PC-9 (cell line): ENCODE measurements at regions of chr7 and their contacts with region 1.

Region 1: DNA sequence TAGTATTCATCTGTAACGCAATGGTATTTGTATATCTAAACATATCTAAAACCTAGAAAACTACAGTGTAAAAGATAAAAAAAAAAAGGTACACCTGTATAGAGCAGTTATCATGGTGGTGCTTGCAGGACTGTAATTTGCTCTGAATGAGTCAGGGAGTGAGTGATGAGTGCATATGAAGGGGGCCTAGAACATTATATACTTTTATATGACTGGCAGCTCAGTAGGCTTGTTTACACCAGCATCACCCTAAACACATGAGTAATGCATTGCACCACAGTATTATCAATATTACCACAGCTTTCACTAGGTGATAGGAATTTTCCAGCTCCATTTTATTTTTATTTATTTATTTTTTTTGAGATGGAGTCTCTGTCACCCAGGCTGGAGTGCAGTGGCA is 40.8 kb downstream of the TRIM24 start:
- DNase-seq: no peak
- H3K4me3 ChIP-seq: no peak overlapping the region
- H3K27ac ChIP-seq: no peak overlapping the region
- H3K4me1 ChIP-seq: no peaks in the 10 kb centered on the region; the same call in 1 of the 2 replicates
- H3K27me3 ChIP-seq: no peaks in the 10 kb centered on the region
- CTCF ChIP-seq: no peak

Region 2: GRCh38 chr7:138025215-138026186 is 475.4 kb before region 1 on chr7:
- CTCF ChIA-PET with region 1: no interaction called
- POLR2A ChIA-PET with region 1: no interaction called
- intact Hi-C with region 1: loop called (anchors 5 kb)
- DNase-seq: peak in 1 of 2 experiments; percentile 73
- H3K4me3 ChIP-seq: no peak overlapping the region
- H3K27ac ChIP-seq: peak overlapping the region; percentile 18; the same call in 1 of the 2 replicates
- H3K4me1 ChIP-seq: peaks cover 22% of the 10 kb centered on the region
- H3K27me3 ChIP-seq: no peaks in the 10 kb centered on the region
- CTCF ChIP-seq: no peak

Region 3: GRCh38 chr7:138352570-138353461 is 148.1 kb before region 1 on chr7:
- CTCF ChIA-PET with region 1: no interaction called
- POLR2A ChIA-PET with region 1: no interaction called
- intact Hi-C with region 1: no loop called
- DNase-seq: no peak
- H3K4me3 ChIP-seq: no peak overlapping the region
- H3K27ac ChIP-seq: no peak overlapping the region
- H3K4me1 ChIP-seq: no peaks in the 10 kb centered on the region
- H3K27me3 ChIP-seq: no peaks in the 10 kb centered on the region
- CTCF ChIP-seq: no peak

Region 4: GRCh38 chr7:138549082-138549481 is 48.2 kb after region 1 on chr7:
- CTCF ChIA-PET with region 1: no interaction called
- POLR2A ChIA-PET with region 1: no interaction called
- intact Hi-C with region 1: no loop called
- DNase-seq: peak in 1 of 2 experiments; percentile 64
- H3K4me3 ChIP-seq: no peak overlapping the region
- H3K27ac ChIP-seq: no peak overlapping the region
- H3K4me1 ChIP-seq: no peaks in the 10 kb centered on the region
- H3K27me3 ChIP-seq: no peaks in the 10 kb centered on the region
- CTCF ChIP-seq: no peak